AG04450 (cell line): ENCODE measurements at regions of chr17 and their contacts with region 1.

Region 1: DNA sequence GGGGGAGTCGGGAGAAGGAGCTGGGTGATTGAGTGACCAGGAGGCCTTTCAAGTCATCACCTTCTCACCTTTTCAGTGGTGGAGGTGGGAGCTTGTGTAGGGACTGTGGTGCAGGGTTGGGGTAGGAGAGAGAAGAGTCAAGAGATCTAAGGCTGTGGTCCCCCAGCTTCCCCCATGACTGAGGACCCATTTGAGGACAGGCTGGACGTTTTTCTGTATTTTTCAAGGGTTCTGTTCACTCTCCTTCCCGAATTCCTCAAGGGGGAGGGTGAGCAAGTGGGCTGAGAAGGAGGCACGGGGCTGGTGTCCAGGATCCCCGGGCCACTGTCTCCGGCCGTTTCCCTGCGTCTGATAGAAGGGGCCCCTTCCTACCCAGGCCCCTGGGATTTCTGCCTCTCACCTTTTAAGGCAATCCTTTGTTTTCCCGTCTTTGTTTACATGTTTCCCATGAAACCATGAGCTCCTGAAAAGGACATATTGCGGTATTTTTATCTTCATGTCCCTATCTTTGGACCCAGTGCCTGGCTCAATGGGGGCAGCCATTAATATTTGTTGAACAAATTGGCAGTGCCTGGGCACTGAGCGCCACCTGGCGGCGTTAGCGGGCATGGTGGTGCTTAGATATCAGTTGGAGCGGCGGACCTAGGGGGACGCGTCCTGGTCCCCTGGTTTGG is 9.2 kb upstream of the CD300A start:
- DNase-seq: peak; percentile 11
- H3K4me3 ChIP-seq: no peak overlapping the region
- H3K27ac ChIP-seq: no peak overlapping the region
- H3K27me3 ChIP-seq: no peaks in the 10 kb centered on the region
- CTCF ChIP-seq: peak; percentile 88

Region 2: DNA sequence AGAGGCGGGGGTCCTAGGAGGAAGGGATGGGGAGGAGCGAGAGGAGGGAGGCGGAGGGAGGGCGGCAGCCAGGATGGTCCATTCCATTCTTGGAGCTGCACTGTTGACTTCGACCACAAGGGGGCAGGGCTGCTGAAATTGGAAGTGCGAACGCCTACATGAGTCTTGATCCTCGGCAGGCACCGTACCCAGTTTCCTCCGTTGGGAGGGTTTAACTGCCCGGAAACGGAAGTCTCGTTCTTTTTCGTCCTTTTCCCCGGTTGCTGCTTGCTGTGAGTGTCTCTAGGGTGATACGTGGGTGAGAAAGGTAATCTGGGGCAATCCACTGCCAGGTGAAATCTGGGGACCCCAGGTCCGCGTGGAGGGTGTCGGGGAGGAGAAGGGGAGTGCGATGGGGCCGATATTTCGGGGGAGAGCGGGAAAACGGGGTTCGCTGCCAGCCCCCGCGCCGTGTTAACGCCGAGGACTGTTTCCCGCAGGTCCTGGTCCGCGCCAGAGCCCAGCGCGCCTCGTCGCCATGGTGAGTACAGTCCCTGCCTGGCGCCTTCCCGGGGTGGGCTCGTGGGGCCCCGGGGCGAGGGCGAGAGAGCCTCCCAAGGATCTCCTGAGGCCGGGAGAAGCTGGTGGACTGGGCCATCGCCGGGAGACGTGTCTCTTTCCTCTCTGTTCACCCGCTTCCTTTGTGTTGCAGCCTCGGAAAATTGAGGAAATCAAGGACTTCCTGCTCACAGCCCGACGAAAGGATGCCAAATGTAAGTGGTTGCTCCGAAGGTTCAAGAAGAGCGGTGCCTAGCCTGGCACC is 253.6 kb before region 1 on chr17 and contains the start of gene RPL38:
- CTCF ChIA-PET with region 1: interaction called, 10 read pairs
- POLR2A ChIA-PET with region 1: no interaction called
- DNase-seq: peak; percentile 94
- H3K4me3 ChIP-seq: peak within 1 kb of the TSS; percentile 96
- H3K27ac ChIP-seq: peak within 1 kb of the TSS; percentile 88
- H3K27me3 ChIP-seq: peaks cover 13% of the 10 kb centered on the region
- CTCF ChIP-seq: peak; percentile 97
- polyA plus RNA-seq, gene RPL38: 2,243 and 2,383 TPM in 2 replicates

Region 3: DNA sequence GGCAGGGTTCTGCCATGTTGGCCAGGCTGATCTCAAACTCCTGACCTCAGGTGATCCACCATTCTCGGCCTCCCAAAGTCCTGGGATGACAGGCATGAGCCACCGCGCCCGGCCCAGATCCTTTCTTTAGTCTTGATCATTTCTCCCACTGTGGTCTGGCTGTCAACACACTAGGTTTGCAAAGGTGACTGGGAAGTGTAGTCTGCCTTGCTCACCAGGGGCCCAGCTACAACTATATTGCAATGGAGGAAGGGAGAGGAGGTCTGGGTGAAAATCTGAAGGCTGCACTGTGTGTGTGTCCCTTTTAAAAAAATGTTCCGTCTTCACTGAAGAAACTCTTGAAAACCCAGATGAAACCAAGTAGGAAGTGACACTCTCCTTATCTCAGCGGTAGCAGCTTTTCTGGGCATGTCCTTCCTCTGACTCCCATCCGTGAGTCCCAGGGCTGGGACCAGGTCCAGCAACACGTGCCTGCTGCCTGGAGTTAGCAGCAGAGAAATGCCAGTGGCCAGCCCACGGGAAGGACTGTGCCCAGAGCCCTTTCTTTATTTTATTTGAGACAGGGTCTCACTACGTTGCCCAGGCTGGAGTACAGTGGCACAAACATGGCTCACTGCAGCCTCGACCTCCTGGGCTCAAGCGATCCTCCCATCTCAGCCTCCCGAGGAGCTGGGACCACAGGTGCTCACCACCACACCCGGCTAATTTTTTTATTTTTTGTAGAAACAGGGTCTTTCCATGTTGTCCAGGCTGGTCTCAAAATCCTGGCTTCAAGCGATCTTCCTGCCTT is 149.1 kb before region 1 on chr17:
- CTCF ChIA-PET with region 1: no interaction called
- POLR2A ChIA-PET with region 1: no interaction called
- DNase-seq: no peak
- H3K4me3 ChIP-seq: no peak overlapping the region
- H3K27ac ChIP-seq: no peak overlapping the region
- H3K27me3 ChIP-seq: no peaks in the 10 kb centered on the region
- CTCF ChIP-seq: no peak

Region 4: DNA sequence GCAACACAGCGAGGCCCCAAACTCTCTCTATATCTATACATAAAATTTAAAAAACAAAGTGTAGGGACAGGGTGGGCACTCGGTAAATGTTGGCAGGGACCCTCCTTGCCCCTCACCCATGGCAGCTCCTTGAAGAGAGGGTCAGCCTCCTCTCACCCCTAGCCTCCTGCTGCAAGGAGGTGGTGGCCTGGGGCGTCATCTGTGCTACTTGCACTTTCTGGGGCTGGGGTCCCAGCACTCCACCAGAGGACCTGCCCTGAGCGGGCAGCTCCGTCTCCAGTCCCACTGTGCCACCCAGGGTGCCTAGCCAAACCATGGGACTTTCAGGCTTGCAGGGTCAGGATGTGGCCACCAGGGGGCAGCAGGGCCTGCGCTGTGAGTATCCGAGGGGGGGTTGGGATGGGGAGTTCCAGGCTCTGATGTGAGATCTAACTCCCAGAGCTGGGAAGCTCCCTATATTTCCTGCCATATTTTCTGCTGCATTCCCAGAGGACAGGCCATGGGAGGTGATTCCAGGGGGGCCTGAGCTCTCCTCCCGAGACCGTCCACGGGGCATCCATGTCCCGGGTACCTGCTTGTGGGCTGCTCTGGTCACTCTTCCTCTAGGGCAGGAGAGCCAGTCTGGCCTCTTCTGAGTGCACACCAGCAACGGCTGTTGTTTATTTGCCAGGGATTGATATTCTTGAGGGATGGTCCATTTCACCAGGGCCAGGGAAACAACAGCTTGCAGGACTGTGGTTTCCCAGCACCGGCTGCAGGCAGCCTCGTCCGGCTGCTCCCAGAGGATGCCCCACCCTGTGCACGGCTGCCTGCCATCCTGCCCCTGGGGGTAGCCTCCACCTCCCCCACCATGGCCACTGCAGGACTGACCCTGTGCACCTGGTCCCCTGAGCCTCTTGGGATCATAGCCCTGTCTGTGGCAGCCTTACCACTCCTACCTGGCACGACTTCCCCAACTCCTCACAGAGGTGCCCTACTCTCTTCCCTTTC is 88.9 kb before region 1 on chr17:
- CTCF ChIA-PET with region 1: interaction called, 37 read pairs
- POLR2A ChIA-PET with region 1: no interaction called
- DNase-seq: no peak
- H3K4me3 ChIP-seq: no peak overlapping the region
- H3K27ac ChIP-seq: no peak overlapping the region
- H3K27me3 ChIP-seq: peaks cover 2% of the 10 kb centered on the region
- CTCF ChIP-seq: peak; percentile 89

Region 5: GRCh38 chr17:74373838-74374606 is 83.3 kb before region 1 on chr17:
- CTCF ChIA-PET with region 1: interaction called, 94 read pairs
- POLR2A ChIA-PET with region 1: no interaction called
- DNase-seq: no peak
- H3K4me3 ChIP-seq: no peak overlapping the region
- H3K27ac ChIP-seq: no peak overlapping the region
- H3K27me3 ChIP-seq: peaks cover 3% of the 10 kb centered on the region
- CTCF ChIP-seq: no peak

Region 6: GRCh38 chr17:74379495-74380085 is 77.7 kb before region 1 on chr17:
- CTCF ChIA-PET with region 1: interaction called, 94 read pairs
- POLR2A ChIA-PET with region 1: no interaction called
- DNase-seq: peak; percentile 27
- H3K4me3 ChIP-seq: no peak overlapping the region
- H3K27ac ChIP-seq: no peak overlapping the region
- H3K27me3 ChIP-seq: no peaks in the 10 kb centered on the region
- CTCF ChIP-seq: peak; percentile 81

Region 7: GRCh38 chr17:74444406-74444805 is 12.9 kb before region 1 on chr17:
- CTCF ChIA-PET with region 1: interaction called, 13 read pairs
- POLR2A ChIA-PET with region 1: no interaction called
- DNase-seq: no peak
- H3K4me3 ChIP-seq: no peak overlapping the region
- H3K27ac ChIP-seq: no peak overlapping the region
- H3K27me3 ChIP-seq: no peaks in the 10 kb centered on the region
- CTCF ChIP-seq: no peak

Region 8: GRCh38 chr17:74677558-74678466 is 220.5 kb after region 1 on chr17:
- CTCF ChIA-PET with region 1: no interaction called
- POLR2A ChIA-PET with region 1: no interaction called
- DNase-seq: no peak
- H3K4me3 ChIP-seq: no peak overlapping the region
- H3K27ac ChIP-seq: no peak overlapping the region
- H3K27me3 ChIP-seq: no peaks in the 10 kb centered on the region
- CTCF ChIP-seq: no peak